Gastrocnemius medialis (tissue), 4 donors: ENCODE measurements at regions of chr4 and their contacts with region 1.

Region 1: DNA sequence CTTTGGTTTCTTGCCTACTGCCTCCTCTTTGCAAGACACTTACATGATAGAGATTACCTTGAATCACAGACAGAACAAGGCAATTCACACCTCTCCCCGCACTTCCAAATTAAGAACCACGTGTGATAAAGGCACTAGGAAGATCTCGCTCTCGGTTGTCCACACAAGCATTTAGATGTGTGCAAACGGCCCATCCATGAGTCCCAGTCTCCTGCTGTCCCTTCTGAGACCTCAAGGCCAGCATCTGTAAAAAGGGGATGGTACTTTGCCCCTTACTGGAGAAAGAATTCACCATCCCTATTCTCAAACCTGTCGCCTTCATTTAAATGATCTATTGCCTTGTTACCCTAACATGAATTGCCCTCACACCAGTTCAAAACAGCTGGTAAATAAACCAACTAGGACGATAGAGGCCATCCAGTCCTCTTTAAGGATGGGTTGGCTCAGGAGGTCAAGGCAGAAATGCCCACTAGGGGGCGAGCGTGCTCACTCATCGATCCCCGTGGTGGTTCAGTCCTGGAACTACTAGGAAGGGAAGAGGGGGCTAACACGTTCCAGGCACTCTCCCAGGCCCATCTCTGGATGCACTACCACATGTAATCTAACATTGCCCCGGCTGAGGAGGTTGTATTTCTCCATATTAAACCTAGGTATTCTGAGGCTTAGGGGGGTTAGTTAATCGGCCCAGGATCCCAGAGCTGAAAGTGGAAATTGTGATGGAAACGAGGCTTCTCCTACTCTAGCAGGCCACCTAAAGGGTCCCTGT is 95.8 kb downstream of the DHX15 start:
- DNase-seq: peak in 1 of 2 donors; percentile 45
- ATAC-seq: peak; percentile 49 to 76
- H3K4me3 ChIP-seq: no peak overlapping the region
- H3K27ac ChIP-seq: no peak overlapping the region
- H3K4me1 ChIP-seq: peaks cover 0 to 5% of the 10 kb centered on the region in 2 donors
- H3K27me3 ChIP-seq: no peaks in the 10 kb centered on the region
- CTCF ChIP-seq: peak; percentile 46 to 79 (median 68)
- POLR2A ChIP-seq: no peak

Region 2: DNA sequence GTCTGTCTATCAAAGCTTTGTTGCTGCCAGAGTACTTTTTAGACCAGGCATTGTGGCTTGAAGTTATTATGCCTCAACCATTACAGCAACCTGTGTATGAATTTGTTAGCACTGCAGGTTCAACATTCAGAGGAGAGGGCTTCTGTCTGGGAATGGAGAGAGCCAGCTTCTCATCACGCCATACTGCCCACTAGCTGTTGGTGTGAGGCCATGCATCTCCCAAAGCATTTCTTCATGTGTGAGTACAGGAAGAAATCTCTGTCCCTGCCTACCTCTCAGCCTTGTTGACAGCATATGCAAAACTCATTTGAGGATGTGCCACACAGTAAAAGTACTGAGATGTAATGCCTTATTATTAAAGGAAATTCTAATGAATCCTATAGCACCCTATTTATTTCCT is 521.9 kb before region 1 on chr4:
- in situ Hi-C with region 1: no loop called
- intact Hi-C with region 1: no loop called
- DNase-seq: no peak
- ATAC-seq: peak in 1 of 2 donors; percentile 56
- H3K4me3 ChIP-seq: no peak overlapping the region
- H3K27ac ChIP-seq: no peak overlapping the region
- H3K4me1 ChIP-seq: peaks cover 0 to 5% of the 10 kb centered on the region in 2 donors
- H3K27me3 ChIP-seq: no peaks in the 10 kb centered on the region
- CTCF ChIP-seq: peak in 3 of 5 experiments; percentile 19 to 36 (median 28)
- POLR2A ChIP-seq: no peak

Region 3: GRCh38 chr4:24226023-24226422 is 262.6 kb before region 1 on chr4:
- in situ Hi-C with region 1: no loop called
- intact Hi-C with region 1: no loop called
- DNase-seq: no peak
- ATAC-seq: no peak
- H3K4me3 ChIP-seq: no peak overlapping the region
- H3K27ac ChIP-seq: no peak overlapping the region
- H3K4me1 ChIP-seq: no peaks in the 10 kb centered on the region
- H3K27me3 ChIP-seq: no peaks in the 10 kb centered on the region
- CTCF ChIP-seq: no peak
- POLR2A ChIP-seq: no peak

Region 4: GRCh38 chr4:24686871-24687680 is 198.5 kb after region 1 on chr4:
- in situ Hi-C with region 1: no loop called
- intact Hi-C with region 1: loop called (anchors 10 kb)
- DNase-seq: no peak
- ATAC-seq: peak in 1 of 2 donors; percentile 42
- H3K4me3 ChIP-seq: no peak overlapping the region
- H3K27ac ChIP-seq: no peak overlapping the region
- H3K4me1 ChIP-seq: no peaks in the 10 kb centered on the region
- H3K27me3 ChIP-seq: no peaks in the 10 kb centered on the region
- CTCF ChIP-seq: peak in 3 of 5 experiments; percentile 19 to 37 (median 21)
- POLR2A ChIP-seq: no peak

Region 5: DNA sequence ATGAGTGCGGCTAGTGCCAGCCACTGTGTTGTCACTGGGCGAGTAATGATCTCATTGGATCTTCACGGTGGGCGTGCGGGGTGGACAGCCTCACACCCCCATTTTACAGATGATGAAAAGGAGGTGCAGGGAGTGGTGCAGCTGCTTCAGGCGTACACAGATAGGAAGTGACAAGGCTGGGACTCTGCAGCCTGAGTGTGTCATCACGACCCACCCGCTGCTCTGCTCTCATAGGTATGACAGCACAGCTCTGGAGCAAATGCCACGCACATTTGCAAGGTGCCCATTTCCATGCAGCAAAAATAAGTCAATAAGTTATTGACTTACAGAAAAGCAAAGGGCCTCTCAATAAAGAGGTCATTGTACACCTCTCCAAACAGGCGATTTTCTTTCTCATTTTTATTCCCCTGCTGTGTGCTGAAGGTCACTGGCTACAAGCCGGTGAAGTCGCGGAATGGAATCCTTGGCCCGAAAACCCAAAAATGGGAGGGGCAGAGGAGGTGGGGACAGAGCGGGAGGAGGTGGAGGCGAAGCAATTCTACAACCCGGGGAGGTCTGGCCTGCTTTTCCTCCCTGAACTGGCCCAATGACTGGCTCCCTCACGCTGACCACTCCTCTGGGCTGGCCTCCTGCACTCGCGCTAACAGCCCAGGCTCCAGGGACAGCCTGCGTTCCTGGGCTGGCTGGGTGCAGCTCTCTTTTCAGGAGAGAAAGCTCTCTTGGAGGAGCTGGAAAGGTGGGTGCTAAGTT is 306.5 kb after region 1 on chr4 and contains the start of gene SOD3:
- in situ Hi-C with region 1: loop called in 2 of 4 experiments (anchors 25 kb)
- intact Hi-C with region 1: loop called (anchors 10 kb)
- DNase-seq: peak; percentile 48 to 66
- ATAC-seq: peak; percentile 71 to 74
- H3K4me3 ChIP-seq: peak within 1 kb of the TSS; percentile 18 to 51 (median 37)
- H3K27ac ChIP-seq: peak within 1 kb of the TSS; percentile 34 to 74 (median 57)
- H3K4me1 ChIP-seq: peaks cover 13 to 19% of the 10 kb centered on the region in 2 donors
- H3K27me3 ChIP-seq: peaks cover 0 to 8% (median 0%) of the 10 kb centered on the region in 3 donors
- CTCF ChIP-seq: no peak
- POLR2A ChIP-seq: peak; percentile 18 to 22
- total RNA-seq, gene SOD3: 2.5 to 13.0 (median 5.9) TPM

Region 6: GRCh38 chr4:24980064-24980690 is 491.6 kb after region 1 on chr4:
- in situ Hi-C with region 1: loop called in 1 of 4 experiments (anchors 25 kb)
- intact Hi-C with region 1: no loop called
- DNase-seq: peak; percentile 23 to 33
- ATAC-seq: peak; percentile 44 to 76
- H3K4me3 ChIP-seq: peak overlapping the region; percentile 10 to 47 (median 40)
- H3K27ac ChIP-seq: peak overlapping the region; percentile 67 to 74 (median 70)
- H3K4me1 ChIP-seq: peaks cover 0 to 5% of the 10 kb centered on the region in 2 donors
- H3K27me3 ChIP-seq: no peaks in the 10 kb centered on the region
- CTCF ChIP-seq: peak; percentile 68 to 88 (median 74)
- POLR2A ChIP-seq: no peak

Region 7: DNA sequence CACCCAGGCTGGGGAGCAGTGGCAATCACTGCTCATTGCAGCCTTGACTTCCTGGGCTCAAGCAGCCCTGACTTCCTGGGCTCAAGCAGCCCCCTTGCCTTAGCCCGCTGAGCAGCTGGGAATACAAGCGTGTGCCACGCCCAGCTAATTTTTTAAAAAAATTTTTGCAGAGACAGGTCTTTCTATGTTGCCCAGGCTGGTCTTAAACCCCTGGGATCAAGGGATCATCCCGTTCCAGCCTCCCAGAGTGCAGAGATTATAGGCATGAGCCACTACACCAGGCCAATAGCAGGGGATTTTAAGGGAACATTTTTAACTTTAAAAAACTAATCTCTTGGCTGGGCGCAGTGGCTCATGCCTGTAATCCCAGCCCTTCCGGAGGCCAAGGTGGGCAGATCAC is 1161.7 kb after region 1 on chr4:
- in situ Hi-C with region 1: no loop called
- intact Hi-C with region 1: no loop called
- DNase-seq: no peak
- ATAC-seq: no peak
- H3K4me3 ChIP-seq: no peak overlapping the region
- H3K27ac ChIP-seq: no peak overlapping the region
- H3K4me1 ChIP-seq: no peaks in the 10 kb centered on the region
- H3K27me3 ChIP-seq: peaks cover 0 to 9% (median 8%) of the 10 kb centered on the region in 3 donors
- CTCF ChIP-seq: no peak
- POLR2A ChIP-seq: no peak